ENCODE measurements at regions of chr3 and their contacts with region 1.

Region 1: DNA sequence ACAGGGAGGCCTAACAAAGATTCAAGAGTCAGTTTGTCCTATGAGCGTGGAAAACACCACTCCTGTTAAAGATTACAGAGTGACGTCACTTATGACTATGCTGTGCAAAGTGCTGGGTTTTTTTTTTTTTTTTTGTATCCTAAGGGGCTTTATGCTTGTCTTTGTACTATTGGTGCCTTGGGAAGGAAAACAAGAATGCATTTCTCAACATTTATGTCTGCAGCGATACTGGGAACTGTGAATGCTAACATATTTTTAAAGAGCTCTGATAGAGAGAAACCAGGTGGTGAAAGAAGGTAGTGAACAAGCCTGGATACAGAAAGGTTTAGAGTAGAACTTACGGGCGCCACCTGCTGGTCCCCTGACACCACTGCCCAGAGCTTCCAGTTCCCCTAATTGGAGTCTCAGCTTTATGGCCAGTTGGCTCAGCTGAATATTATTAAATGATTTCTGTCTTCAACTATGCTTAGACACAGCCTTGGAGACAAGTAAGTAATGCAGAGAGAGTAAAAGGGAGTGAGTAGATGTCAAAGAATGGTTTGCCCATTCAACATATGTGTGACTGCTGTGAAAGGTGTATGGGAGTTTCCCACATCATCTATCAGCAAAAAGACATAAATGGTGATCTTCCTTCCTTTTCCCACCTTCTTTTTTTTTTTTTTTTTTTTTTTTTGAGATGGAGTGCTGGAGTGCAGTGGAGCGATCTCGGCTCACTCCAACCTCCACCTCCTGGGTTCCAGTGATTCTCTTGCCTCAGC is 807.9 kb upstream of the CFAP20DC start:
- DNase-seq: peak; percentile 86
- ATAC-seq: peak; percentile 99
- H3K4me3 ChIP-seq: no peak overlapping the region
- H3K27ac ChIP-seq: no peak overlapping the region
- H3K4me1 ChIP-seq: peaks cover 10% of the 10 kb centered on the region; the same call in 1 of the 2 replicates
- H3K27me3 ChIP-seq: no peaks in the 10 kb centered on the region
- CTCF ChIP-seq: peak; percentile 96

Region 2: GRCh38 chr3:58824285-58824684 is 1033.5 kb before region 1 on chr3:
- CTCF ChIA-PET with region 1: no interaction called
- POLR2A ChIA-PET with region 1: no interaction called
- intact Hi-C with region 1: loop called (anchors 2 kb)
- DNase-seq: peak; percentile 81
- ATAC-seq: peak; percentile 81
- H3K4me3 ChIP-seq: no peak overlapping the region
- H3K27ac ChIP-seq: no peak overlapping the region
- H3K4me1 ChIP-seq: no peaks in the 10 kb centered on the region
- H3K27me3 ChIP-seq: no peaks in the 10 kb centered on the region
- CTCF ChIP-seq: peak; percentile 97

Region 3: DNA sequence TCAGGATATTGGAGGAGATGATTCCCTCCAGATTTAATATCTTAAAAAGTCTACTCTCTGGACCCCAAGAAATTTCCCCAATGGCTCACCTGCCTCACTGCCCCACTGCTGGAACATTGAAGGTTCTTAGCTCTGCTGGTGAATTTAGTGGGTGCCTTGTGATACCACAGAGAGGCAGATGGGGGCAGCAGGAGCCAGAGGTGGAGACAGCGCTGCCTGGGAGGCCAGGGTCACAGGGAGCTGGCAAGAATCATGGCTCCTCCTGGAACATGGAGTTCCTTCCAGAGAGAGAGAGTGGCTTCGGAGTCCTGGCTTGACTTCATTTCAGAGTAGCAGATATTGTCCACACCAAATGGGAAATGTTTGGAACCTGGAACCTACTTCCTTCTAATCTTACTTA is 544.4 kb before region 1 on chr3:
- CTCF ChIA-PET with region 1: interaction called, 3 read pairs
- POLR2A ChIA-PET with region 1: no interaction called
- intact Hi-C with region 1: loop called (anchors 5 kb)
- DNase-seq: peak; percentile 56
- ATAC-seq: peak; percentile 74
- H3K4me3 ChIP-seq: no peak overlapping the region
- H3K27ac ChIP-seq: no peak overlapping the region
- H3K4me1 ChIP-seq: peaks cover 5% of the 10 kb centered on the region; the same call in 1 of the 2 replicates
- H3K27me3 ChIP-seq: no peaks in the 10 kb centered on the region
- CTCF ChIP-seq: peak; percentile 73

Region 4: DNA sequence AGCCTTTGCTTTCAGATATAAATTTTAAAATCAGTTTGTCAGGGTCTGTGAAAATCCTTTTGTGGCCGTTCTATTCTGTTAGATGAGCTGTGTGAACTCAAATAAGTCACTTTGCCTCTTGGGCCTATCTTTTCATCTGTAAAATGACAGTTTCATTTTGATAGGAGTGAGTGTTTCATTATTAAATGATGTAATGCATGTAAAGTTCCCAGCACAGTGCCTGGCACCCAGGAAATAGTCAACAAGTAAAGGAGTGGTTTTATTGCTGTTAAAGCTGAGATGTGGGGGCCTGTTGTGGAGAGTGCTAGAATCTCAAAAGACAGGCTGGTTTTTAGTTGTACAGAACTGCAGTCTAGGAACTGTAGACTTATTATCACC is 413.5 kb before region 1 on chr3:
- CTCF ChIA-PET with region 1: no interaction called
- POLR2A ChIA-PET with region 1: no interaction called
- intact Hi-C with region 1: loop called (anchors 5 kb)
- DNase-seq: no peak
- ATAC-seq: no peak
- H3K4me3 ChIP-seq: no peak overlapping the region
- H3K27ac ChIP-seq: no peak overlapping the region
- H3K4me1 ChIP-seq: peaks cover 15% of the 10 kb centered on the region
- H3K27me3 ChIP-seq: no peaks in the 10 kb centered on the region
- CTCF ChIP-seq: no peak

Region 5: GRCh38 chr3:59480486-59480995 is 377.2 kb before region 1 on chr3:
- CTCF ChIA-PET with region 1: no interaction called
- POLR2A ChIA-PET with region 1: no interaction called
- intact Hi-C with region 1: no loop called
- DNase-seq: peak; percentile 74
- ATAC-seq: peak; percentile 76
- H3K4me3 ChIP-seq: no peak overlapping the region; the same call in 1 of the 2 replicates
- H3K27ac ChIP-seq: no peak overlapping the region
- H3K4me1 ChIP-seq: peaks cover 31% of the 10 kb centered on the region
- H3K27me3 ChIP-seq: no peaks in the 10 kb centered on the region
- CTCF ChIP-seq: no peak

Region 6: GRCh38 chr3:59575113-59576001 is 282.4 kb before region 1 on chr3:
- CTCF ChIA-PET with region 1: interaction called, 7 read pairs
- POLR2A ChIA-PET with region 1: no interaction called
- intact Hi-C with region 1: loop called (anchors 1 kb)
- DNase-seq: peak; percentile 92
- ATAC-seq: peak; percentile 75
- H3K4me3 ChIP-seq: no peak overlapping the region
- H3K27ac ChIP-seq: no peak overlapping the region
- H3K4me1 ChIP-seq: peaks cover 22% of the 10 kb centered on the region
- H3K27me3 ChIP-seq: no peaks in the 10 kb centered on the region
- CTCF ChIP-seq: peak; percentile 97

Region 7: GRCh38 chr3:59607656-59608055 is 250.1 kb before region 1 on chr3:
- CTCF ChIA-PET with region 1: no interaction called
- POLR2A ChIA-PET with region 1: no interaction called
- intact Hi-C with region 1: loop called (anchors 1 kb)
- DNase-seq: peak; percentile 14
- ATAC-seq: no peak
- H3K4me3 ChIP-seq: no peak overlapping the region
- H3K27ac ChIP-seq: no peak overlapping the region
- H3K4me1 ChIP-seq: no peaks in the 10 kb centered on the region
- H3K27me3 ChIP-seq: no peaks in the 10 kb centered on the region
- CTCF ChIP-seq: peak; percentile 33

Region 8: GRCh38 chr3:59641169-59641899 is 216.4 kb before region 1 on chr3:
- CTCF ChIA-PET with region 1: no interaction called
- POLR2A ChIA-PET with region 1: no interaction called
- intact Hi-C with region 1: no loop called
- DNase-seq: no peak
- ATAC-seq: no peak
- H3K4me3 ChIP-seq: no peak overlapping the region
- H3K27ac ChIP-seq: no peak overlapping the region
- H3K4me1 ChIP-seq: no peaks in the 10 kb centered on the region
- H3K27me3 ChIP-seq: peaks cover 7% of the 10 kb centered on the region; the same call in 1 of the 2 replicates
- CTCF ChIP-seq: no peak

Region 9: GRCh38 chr3:59818033-59818920 is 39.5 kb before region 1 on chr3:
- CTCF ChIA-PET with region 1: interaction called, 7 read pairs
- POLR2A ChIA-PET with region 1: interaction called, 5 read pairs
- intact Hi-C with region 1: loop called (anchors 1 kb)
- DNase-seq: peak; percentile 96
- ATAC-seq: peak; percentile 86
- H3K4me3 ChIP-seq: peak overlapping the region; percentile 62
- H3K27ac ChIP-seq: peak overlapping the region; percentile 98
- H3K4me1 ChIP-seq: peaks cover 53% of the 10 kb centered on the region
- H3K27me3 ChIP-seq: no peaks in the 10 kb centered on the region
- CTCF ChIP-seq: no peak

Region 10: GRCh38 chr3:59908280-59908679 is 50.5 kb after region 1 on chr3:
- CTCF ChIA-PET with region 1: no interaction called
- POLR2A ChIA-PET with region 1: no interaction called
- intact Hi-C with region 1: no loop called
- DNase-seq: no peak
- ATAC-seq: no peak
- H3K4me3 ChIP-seq: no peak overlapping the region
- H3K27ac ChIP-seq: no peak overlapping the region
- H3K4me1 ChIP-seq: no peaks in the 10 kb centered on the region
- H3K27me3 ChIP-seq: peaks cover 18% of the 10 kb centered on the region
- CTCF ChIP-seq: no peak

Region 11: DNA sequence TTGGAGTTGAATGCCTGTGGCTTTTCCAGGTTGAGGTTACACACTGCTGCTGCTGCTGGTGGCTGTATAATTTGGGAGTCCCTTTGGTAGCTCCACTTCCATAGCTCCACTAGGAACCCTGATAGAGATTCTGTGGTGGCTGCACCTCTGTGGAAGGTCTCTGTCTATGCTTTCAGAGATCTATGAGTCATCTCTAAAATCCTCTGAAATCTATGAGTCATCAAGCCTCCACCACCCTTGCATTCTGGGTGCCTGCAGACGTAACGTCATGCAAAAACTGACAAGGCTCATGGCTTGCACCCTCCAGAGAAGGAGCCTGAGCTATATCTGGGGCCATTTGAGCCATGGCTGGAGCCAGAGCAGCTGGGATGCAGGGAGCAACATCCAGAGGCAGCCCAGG is 229.0 kb after region 1 on chr3:
- CTCF ChIA-PET with region 1: no interaction called
- POLR2A ChIA-PET with region 1: no interaction called
- intact Hi-C with region 1: no loop called
- DNase-seq: peak; percentile 50
- ATAC-seq: peak; percentile 29; the same call in 1 of the 2 replicates
- H3K4me3 ChIP-seq: no peak overlapping the region
- H3K27ac ChIP-seq: no peak overlapping the region
- H3K4me1 ChIP-seq: no peaks in the 10 kb centered on the region
- H3K27me3 ChIP-seq: no peaks in the 10 kb centered on the region
- CTCF ChIP-seq: no peak